RWPE1 (cell line): ENCODE measurements at regions of chr16 and their contacts with region 1.

Region 1: GRCh38 chr16:85514595-85515318 is 98.4 kb upstream of the GSE1 start:
- DNase-seq: peak; percentile 92
- H3K27ac ChIP-seq: peak overlapping the region; percentile 98
- CTCF ChIP-seq: no peak

Region 2: GRCh38 chr16:85503679-85504231 is 11.0 kb before region 1 on chr16:
- CTCF ChIA-PET with region 1: no interaction called
- POLR2A ChIA-PET with region 1: no interaction called
- DNase-seq: no peak
- H3K27ac ChIP-seq: no peak overlapping the region
- CTCF ChIP-seq: no peak

Region 3: DNA sequence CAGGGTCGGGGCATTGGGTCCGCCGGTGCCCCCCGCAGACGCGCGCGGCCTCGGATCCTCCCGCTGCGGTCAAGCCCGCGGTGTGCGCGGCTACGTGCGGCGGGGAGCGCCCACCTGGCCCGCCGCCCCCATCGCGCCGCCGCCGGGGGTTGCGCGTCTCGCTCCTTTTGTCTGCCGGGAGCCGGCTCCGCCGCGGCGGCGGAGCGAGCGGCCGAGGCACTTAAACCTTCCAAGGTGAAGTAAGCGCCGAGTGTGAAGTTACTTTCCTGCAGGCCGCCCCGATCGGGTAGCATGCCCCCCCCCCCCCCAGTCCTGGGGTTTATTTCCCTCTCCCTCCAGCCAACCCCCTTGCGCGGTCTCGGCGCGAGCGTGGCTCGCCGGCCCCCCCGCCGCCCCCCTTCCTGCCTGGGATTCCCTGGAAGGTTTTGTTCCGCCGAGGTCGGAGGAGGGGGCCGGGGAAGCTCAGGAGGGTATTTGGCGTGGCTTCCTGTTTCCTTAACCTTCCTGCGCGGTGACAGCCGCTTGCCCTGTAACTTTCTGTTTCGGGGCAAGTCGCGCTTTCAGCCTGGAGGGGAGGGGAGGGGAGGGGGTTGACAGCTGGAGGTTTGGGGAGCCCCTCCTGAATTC is 41.8 kb after region 1 on chr16:
- CTCF ChIA-PET with region 1: interaction called, 5 read pairs
- POLR2A ChIA-PET with region 1: interaction called, 10 read pairs
- DNase-seq: peak; percentile 71
- H3K27ac ChIP-seq: peak overlapping the region; percentile 99
- CTCF ChIP-seq: no peak

Region 4: GRCh38 chr16:85659805-85660495 is 145.2 kb after region 1 on chr16:
- CTCF ChIA-PET with region 1: no interaction called
- POLR2A ChIA-PET with region 1: no interaction called
- DNase-seq: peak; percentile 63
- H3K27ac ChIP-seq: peak overlapping the region; percentile 22; the same call in 1 of the 2 replicates
- CTCF ChIP-seq: peak; percentile 85